Esophagus muscularis mucosa (tissue), 4 donors: ENCODE measurements at regions of chr12 and their contacts with region 1.

Region 1: GRCh38 chr12:27999521-27999920 is 27.0 kb upstream of the PTHLH start:
- DNase-seq: no peak
- H3K4me3 ChIP-seq: no peak overlapping the region
- H3K27ac ChIP-seq: no peak overlapping the region
- H3K4me1 ChIP-seq: no peaks in the 10 kb centered on the region
- H3K27me3 ChIP-seq: no peaks in the 10 kb centered on the region
- CTCF ChIP-seq: no peak
- EP300 ChIP-seq: no peak
- POLR2A ChIP-seq: no peak

Region 2: GRCh38 chr12:27957366-27957765 is 42.2 kb before region 1 on chr12:
- intact Hi-C with region 1: loop called (anchors 2 kb)
- DNase-seq: no peak
- H3K4me3 ChIP-seq: no peak overlapping the region
- H3K27ac ChIP-seq: no peak overlapping the region
- H3K4me1 ChIP-seq: no peaks in the 10 kb centered on the region
- H3K27me3 ChIP-seq: no peaks in the 10 kb centered on the region
- CTCF ChIP-seq: no peak
- EP300 ChIP-seq: no peak
- POLR2A ChIP-seq: no peak